Esophagus muscularis mucosa (tissue), 4 donors: ENCODE measurements at regions of chr5 and their contacts with region 1.

Region 1: DNA sequence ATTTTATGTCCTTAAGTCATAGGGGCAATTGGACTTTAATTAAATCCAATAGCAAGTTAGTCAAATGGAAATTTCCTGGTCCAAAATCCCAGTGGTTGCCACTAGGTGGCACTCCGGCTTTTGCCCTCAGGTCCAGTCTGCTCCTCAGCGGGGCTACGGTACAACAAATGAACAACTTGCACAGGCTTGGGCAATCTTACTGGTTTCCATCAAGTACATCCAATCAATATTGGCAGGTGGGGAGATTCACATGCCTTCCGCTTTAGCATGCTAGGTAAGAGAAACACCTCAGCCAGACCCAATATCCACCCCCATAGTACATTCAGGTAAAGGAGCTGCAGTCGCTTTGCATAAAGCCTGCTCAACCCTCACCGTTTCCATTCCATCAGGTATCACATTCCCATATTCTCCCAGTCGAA is 6.3 kb upstream of the MXD3 start:
- DNase-seq: no peak
- H3K4me3 ChIP-seq: no peak overlapping the region
- H3K27ac ChIP-seq: no peak overlapping the region
- H3K4me1 ChIP-seq: peaks cover 0 to 5% (median 1%) of the 10 kb centered on the region in 4 donors
- H3K27me3 ChIP-seq: no peaks in the 10 kb centered on the region
- CTCF ChIP-seq: peak; percentile 79 to 91 (median 84)
- EP300 ChIP-seq: no peak
- POLR2A ChIP-seq: no peak

Region 2: GRCh38 chr5:177351385-177352329 is 33.7 kb after region 1 on chr5 and contains the start of gene LMAN2:
- intact Hi-C with region 1: loop called (anchors 5 kb)
- DNase-seq: peak; percentile 98
- H3K4me3 ChIP-seq: peak within 1 kb of the TSS; percentile 83 to 99 (median 92)
- H3K27ac ChIP-seq: peak within 1 kb of the TSS; percentile 87 to 92 (median 91)
- H3K4me1 ChIP-seq: peaks cover 17 to 53% (median 48%) of the 10 kb centered on the region in 4 donors
- H3K27me3 ChIP-seq: no peaks in the 10 kb centered on the region
- CTCF ChIP-seq: peak in 1 of 3 experiments; percentile 14
- EP300 ChIP-seq: no peak
- POLR2A ChIP-seq: peak; percentile 66
- total RNA-seq, gene LMAN2: 95.1 to 168 (median 128) TPM

Region 3: DNA sequence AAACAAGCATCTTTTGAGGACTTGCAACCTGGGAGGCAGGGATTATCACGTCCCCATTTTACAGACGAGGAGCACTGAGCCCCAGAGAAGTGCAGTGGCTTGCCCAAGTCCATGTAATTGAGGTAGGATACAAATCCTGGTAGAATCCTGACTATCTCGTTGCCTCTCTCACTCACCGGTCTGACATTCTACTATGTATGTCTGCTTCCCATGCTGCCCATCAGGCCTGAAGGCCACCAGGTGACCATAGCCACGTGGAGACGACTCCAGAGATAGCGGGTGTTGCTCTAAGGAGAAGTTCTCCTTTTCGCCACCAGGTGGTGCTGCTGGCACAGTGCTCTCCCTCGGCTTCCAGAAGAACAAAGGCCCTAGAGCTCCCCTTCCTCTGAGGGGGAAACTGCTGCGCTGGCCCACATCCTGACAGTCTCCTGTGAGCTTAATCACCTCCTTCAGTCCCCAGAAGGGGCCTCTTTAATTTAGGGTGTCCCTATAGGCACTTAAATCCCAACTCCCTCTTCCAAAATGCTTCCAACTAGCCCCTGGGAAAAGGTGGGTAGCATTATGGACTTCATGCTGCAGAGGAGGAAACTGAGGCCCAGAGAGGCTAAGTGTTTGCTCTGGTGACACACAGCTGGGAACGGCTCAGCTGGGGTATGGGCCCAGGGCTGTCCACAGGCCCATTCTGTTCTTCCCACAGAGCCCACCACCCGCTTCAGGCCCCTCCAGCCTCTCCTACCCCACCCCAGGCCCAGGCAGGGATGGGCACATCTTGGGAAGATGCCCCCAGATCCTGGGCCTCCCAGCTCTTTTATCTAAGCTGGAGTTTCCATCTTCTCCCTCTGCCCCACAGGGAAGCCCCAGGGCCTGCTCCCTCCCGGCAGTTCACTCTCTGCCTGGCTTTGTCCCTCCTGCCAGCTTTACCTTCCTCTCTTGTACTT is 72.7 kb after region 1 on chr5:
- intact Hi-C with region 1: loop called (anchors 5 kb)
- DNase-seq: peak; percentile 95
- H3K4me3 ChIP-seq: no peak overlapping the region
- H3K27ac ChIP-seq: no peak overlapping the region
- H3K4me1 ChIP-seq: peaks cover 0 to 21% (median 13%) of the 10 kb centered on the region in 4 donors
- H3K27me3 ChIP-seq: peaks cover 0 to 32% (median 0%) of the 10 kb centered on the region in 4 donors
- CTCF ChIP-seq: peak in 2 of 3 experiments; percentile 96 to 97
- EP300 ChIP-seq: no peak
- POLR2A ChIP-seq: no peak